PC-3 (cell line): ENCODE measurements at regions of chr11 and their contacts with region 1.

Region 1: GRCh38 chr11:65791691-65792213 is 4.9 kb downstream of the OVOL1 start:
- DNase-seq: peak; percentile 77
- ATAC-seq: peak; percentile 51
- H3K4me3 ChIP-seq: peak overlapping the region; percentile 39; the same call in 1 of the 2 replicates
- H3K27ac ChIP-seq: peak overlapping the region; percentile 57
- H3K4me1 ChIP-seq: peaks cover 61% of the 10 kb centered on the region
- H3K27me3 ChIP-seq: no peaks in the 10 kb centered on the region; the same call in 1 of the 2 replicates
- CTCF ChIP-seq: 0 out of 2 replicates have a peak, but pooled peaks have one; percentile 12

Region 2: DNA sequence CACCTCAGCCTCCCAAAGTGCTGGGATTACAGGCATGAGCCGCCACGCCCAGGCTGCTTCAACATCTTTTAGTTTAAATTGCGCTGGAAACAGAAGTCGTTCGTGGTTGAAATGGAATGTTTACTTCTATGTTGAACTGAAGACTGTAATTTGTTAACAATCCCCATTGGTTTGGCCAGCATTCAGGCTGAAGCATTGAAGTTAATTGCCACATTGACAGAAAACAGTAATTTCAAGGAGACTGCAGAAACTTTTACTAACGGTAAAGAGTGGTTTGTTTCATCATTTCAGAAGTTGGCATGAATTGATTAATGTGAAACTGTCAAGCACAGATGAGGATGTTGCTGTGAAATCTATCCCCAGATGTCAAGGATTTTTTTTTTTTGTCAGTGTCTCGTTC is 25.2 kb before region 1 on chr11:
- CTCF ChIA-PET with region 1: no interaction called
- POLR2A ChIA-PET with region 1: no interaction called
- intact Hi-C with region 1: no loop called
- DNase-seq: peak; percentile 41
- ATAC-seq: no peak; the same call in 1 of the 2 replicates
- H3K4me3 ChIP-seq: no peak overlapping the region
- H3K27ac ChIP-seq: no peak overlapping the region
- H3K4me1 ChIP-seq: no peaks in the 10 kb centered on the region
- H3K27me3 ChIP-seq: no peaks in the 10 kb centered on the region
- CTCF ChIP-seq: no peak

Region 3: DNA sequence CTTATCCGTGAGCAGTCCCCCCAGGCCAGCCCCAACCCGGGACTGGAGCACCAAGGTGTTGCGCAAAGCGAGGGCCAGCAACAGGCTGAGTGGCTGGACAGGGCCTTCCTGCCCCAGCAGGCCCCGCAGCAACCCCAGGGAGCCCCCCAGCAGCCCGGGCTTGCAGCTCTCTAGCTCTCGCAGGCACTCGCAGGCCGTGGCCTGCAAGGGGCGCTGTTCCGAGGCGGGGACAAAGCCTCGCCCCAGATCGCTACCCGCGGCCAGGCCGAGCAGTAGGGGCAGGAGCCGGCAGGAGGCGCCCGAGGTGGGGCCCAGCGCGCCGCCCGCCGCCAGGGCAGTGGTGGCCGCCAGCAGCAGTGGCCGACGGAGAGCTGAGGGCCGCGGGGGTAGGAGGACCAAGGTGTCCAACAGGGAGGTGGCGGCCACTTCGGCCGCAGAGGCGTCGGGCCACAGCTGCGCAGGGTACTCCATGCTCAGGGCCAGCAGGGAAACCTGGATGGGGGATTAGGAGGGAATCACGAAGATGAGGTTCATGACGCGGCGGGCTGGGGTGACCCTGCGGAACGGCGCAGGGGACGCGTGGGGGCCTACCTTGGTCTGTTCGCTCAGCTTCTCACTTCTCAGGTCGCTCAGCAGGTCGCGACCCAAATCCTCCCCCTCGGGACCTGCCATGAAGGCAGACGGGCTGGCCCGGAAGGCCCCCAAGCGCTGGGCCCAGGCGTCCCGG is 11.7 kb before region 1 on chr11:
- CTCF ChIA-PET with region 1: interaction called, 17 read pairs
- POLR2A ChIA-PET with region 1: no interaction called
- intact Hi-C with region 1: no loop called
- DNase-seq: peak; percentile 91
- ATAC-seq: peak; percentile 83
- H3K4me3 ChIP-seq: peak overlapping the region; percentile 84
- H3K27ac ChIP-seq: peak overlapping the region; percentile 44
- H3K4me1 ChIP-seq: peaks cover 23% of the 10 kb centered on the region
- H3K27me3 ChIP-seq: no peaks in the 10 kb centered on the region
- CTCF ChIP-seq: peak; percentile 99

Region 4: GRCh38 chr11:65945430-65945911 is 153.7 kb after region 1 on chr11 and contains the start of gene TSGA10IP:
- CTCF ChIA-PET with region 1: no interaction called
- POLR2A ChIA-PET with region 1: interaction called, 11 read pairs
- intact Hi-C with region 1: no loop called
- DNase-seq: no peak
- ATAC-seq: no peak
- H3K4me3 ChIP-seq: no peak within 1 kb of the TSS
- H3K27ac ChIP-seq: no peak within 1 kb of the TSS
- H3K4me1 ChIP-seq: peaks cover 10% of the 10 kb centered on the region; the same call in 1 of the 2 replicates
- H3K27me3 ChIP-seq: no peaks in the 10 kb centered on the region
- CTCF ChIP-seq: no peak
- total RNA-seq, gene TSGA10IP: not detected in 2 replicates